ENCODE measurements at regions of chr21 and their contacts with region 1.

Region 1: GRCh38 chr21:42248783-42249597 is 30.1 kb downstream of the ABCG1 start:
- DNase-seq: no peak
- ATAC-seq: peak; percentile 92
- H3K4me3 Mint-ChIP-seq: peak overlapping the region; percentile 3
- H3K27ac Mint-ChIP-seq: peak overlapping the region; percentile 65
- H3K4me1 Mint-ChIP-seq: peaks cover 61% of the 10 kb centered on the region
- H3K27me3 Mint-ChIP-seq: no peaks in the 10 kb centered on the region
- CTCF ChIP-seq: no peak

Region 2: DNA sequence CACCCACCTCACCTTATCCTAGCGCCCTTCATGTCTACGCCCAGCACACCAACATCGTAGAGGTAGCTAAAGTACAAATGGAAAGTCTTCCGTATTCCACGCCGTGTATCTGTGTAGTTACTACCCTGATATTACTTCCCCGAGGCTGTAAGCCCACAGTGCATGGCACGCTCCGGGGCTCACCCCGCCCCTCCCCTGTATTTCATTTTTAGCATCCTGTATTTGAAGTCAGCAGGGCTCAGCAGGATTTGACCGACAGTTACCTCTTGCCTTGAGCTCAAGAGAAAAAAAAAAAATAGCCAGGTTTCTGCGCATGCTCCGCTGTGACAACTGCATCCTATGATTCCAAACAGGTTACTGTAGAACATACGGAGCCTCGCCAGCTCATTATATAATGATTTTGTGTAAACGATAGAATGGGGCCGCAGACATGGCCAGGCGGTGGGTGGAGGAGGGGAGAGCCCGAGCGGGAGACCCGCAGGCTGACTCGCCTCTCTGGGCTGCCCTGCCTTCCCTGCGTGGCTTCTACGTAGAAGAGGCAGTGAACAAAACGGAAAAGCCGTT is 28.8 kb before region 1 on chr21:
- CTCF ChIA-PET with region 1: interaction called, 4 read pairs
- POLR2A ChIA-PET with region 1: interaction called, 4 read pairs
- intact Hi-C with region 1: loop called (anchors 2 kb)
- DNase-seq: peak; percentile 50
- ATAC-seq: peak; percentile 84
- H3K4me3 Mint-ChIP-seq: peak overlapping the region; percentile 87
- H3K27ac Mint-ChIP-seq: peak overlapping the region; percentile 73
- H3K4me1 Mint-ChIP-seq: peaks cover 39% of the 10 kb centered on the region
- H3K27me3 Mint-ChIP-seq: no peaks in the 10 kb centered on the region
- CTCF ChIP-seq: no peak

Region 3: DNA sequence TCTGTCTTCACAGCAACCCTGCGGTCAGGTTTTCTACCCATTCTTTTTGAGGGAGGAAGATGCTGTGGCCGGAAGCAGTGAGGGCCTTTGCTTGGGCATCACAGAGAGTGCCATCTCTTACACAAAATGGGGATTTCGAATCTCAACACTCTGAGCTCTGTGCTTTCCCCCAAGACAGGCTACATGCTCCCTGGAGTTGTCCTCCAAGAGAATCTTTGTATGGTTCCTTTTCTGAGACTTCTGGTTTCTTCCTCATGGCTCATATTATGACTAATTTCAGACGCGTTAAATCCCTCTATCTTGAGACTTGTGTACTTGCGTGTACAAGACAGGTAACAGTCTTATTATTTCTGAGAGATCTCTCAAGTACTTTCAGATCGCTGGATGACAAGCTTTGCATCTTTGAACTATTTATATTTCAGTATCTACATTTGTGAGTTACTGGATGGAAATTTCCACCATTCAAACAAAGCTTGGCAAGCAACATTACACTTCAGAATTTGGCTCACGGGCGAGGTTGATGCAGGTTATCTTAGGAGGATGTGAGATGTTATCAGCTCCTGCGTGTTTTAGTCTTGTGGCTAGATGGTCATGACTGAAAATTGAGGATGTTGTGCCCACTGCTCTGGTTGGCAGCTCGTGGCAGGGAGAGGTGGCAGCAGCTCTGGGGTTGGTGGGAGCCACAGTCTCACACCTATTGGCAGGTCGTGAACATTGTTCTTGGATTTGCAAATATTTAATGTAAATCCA is 10.6 kb before region 1 on chr21:
- CTCF ChIA-PET with region 1: interaction called, 4 read pairs
- POLR2A ChIA-PET with region 1: interaction called, 3 read pairs
- intact Hi-C with region 1: loop called (anchors 1 kb)
- DNase-seq: no peak
- ATAC-seq: no peak
- H3K4me3 Mint-ChIP-seq: peak overlapping the region; percentile 9
- H3K27ac Mint-ChIP-seq: no peak overlapping the region
- H3K4me1 Mint-ChIP-seq: peaks cover 72% of the 10 kb centered on the region
- H3K27me3 Mint-ChIP-seq: no peaks in the 10 kb centered on the region
- CTCF ChIP-seq: no peak